Activated CD4-positive, alpha-beta T cell treated with anti-CD3 and anti-CD28 coated beads for 36 hours (primary cell): ENCODE measurements at regions of chr3 and their contacts with region 1.

Region 1: GRCh38 chr3:119293871-119294695 is at the start of gene ARHGAP31:
- DNase-seq: peak; percentile 93
- ATAC-seq: peak; percentile 78
- H3K4me3 Mint-ChIP-seq: peak within 1 kb of the TSS; percentile 82
- H3K27ac Mint-ChIP-seq: peak within 1 kb of the TSS; percentile 93
- H3K4me1 Mint-ChIP-seq: peaks cover 52% of the 10 kb centered on the region
- H3K27me3 Mint-ChIP-seq: no peaks in the 10 kb centered on the region
- total RNA-seq, gene ARHGAP31: 9.2 to 9.6 TPM

Region 2: DNA sequence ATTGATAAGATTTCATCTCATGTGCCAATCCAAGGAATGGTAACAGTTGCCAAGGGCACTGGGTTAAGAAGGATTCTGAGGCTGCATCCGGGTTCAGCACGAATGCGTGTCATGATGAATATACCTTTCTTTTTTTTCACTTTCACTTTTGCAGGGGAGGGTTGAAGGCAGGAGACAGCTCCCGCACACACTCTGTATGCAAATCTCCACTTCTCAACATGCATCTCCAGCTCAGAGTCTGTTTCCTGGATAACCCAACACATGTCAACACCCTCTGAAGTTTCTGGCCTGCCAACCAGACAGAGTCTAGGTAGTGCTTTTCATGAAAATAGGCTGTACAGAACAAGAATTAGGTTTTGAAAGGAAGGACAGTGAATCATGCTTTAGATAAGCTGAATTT is 75.0 kb before region 1 on chr3:
- CTCF ChIA-PET with region 1: no interaction called
- POLR2A ChIA-PET with region 1: no interaction called
- intact Hi-C with region 1: loop called in 1 of 2 experiments (anchors 1 kb)
- DNase-seq: peak; percentile 64
- ATAC-seq: peak; percentile 93
- H3K4me3 Mint-ChIP-seq: peak overlapping the region; percentile 45
- H3K27ac Mint-ChIP-seq: peak overlapping the region; percentile 84
- H3K4me1 Mint-ChIP-seq: peaks cover 51% of the 10 kb centered on the region
- H3K27me3 Mint-ChIP-seq: no peaks in the 10 kb centered on the region

Region 3: DNA sequence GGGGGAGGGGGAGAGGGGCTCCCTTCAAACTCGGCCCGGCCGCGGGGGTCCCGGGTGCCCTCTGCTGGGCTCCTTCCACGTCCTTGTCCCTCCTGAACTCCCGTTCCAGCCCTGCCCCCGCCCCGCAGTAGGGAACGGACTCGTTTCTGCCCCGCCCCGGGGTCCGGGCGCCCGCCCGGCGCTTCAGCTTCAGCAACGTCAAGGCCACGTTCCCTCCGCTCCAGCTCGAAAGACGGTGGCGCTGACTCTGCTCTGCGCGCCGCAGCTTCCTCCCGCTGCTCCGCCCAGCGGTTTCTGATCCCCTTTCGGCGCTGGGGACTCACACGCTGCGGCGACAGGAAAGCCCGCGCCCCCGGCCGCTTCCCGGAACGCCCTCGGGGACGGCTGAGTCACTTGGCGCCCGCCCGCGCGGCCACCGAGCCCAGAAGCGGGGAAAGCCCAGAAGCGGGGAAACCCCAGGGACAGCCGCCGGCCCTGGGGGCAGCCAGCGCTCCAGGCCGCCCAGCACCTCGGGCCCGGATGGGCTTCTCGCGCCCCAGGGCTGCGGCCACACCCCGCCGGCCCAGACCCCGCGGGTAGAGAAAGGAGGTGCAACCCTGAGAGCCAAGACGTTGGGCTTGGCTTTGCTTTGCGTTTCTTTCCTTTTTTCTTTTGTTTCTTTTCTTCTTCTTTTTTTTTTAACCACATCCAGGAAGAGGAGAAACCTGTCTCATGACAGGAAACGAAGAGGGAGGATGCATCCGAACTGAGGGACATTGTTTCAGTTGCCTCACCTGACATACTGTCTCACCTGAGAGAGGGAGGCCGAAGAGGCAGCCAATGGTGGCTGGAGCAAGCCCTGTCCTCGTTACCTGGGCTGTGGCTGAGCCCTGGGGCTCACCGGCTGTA is 29.0 kb after region 1 on chr3:
- CTCF ChIA-PET with region 1: interaction called, 6 read pairs
- POLR2A ChIA-PET with region 1: interaction called, 18 read pairs
- intact Hi-C with region 1: loop called (anchors 1 kb)
- DNase-seq: peak; percentile 97
- ATAC-seq: peak; percentile 92
- H3K4me3 Mint-ChIP-seq: peak overlapping the region; percentile 83
- H3K27ac Mint-ChIP-seq: peak overlapping the region; percentile 87
- H3K4me1 Mint-ChIP-seq: peaks cover 46% of the 10 kb centered on the region
- H3K27me3 Mint-ChIP-seq: no peaks in the 10 kb centered on the region

Region 4: DNA sequence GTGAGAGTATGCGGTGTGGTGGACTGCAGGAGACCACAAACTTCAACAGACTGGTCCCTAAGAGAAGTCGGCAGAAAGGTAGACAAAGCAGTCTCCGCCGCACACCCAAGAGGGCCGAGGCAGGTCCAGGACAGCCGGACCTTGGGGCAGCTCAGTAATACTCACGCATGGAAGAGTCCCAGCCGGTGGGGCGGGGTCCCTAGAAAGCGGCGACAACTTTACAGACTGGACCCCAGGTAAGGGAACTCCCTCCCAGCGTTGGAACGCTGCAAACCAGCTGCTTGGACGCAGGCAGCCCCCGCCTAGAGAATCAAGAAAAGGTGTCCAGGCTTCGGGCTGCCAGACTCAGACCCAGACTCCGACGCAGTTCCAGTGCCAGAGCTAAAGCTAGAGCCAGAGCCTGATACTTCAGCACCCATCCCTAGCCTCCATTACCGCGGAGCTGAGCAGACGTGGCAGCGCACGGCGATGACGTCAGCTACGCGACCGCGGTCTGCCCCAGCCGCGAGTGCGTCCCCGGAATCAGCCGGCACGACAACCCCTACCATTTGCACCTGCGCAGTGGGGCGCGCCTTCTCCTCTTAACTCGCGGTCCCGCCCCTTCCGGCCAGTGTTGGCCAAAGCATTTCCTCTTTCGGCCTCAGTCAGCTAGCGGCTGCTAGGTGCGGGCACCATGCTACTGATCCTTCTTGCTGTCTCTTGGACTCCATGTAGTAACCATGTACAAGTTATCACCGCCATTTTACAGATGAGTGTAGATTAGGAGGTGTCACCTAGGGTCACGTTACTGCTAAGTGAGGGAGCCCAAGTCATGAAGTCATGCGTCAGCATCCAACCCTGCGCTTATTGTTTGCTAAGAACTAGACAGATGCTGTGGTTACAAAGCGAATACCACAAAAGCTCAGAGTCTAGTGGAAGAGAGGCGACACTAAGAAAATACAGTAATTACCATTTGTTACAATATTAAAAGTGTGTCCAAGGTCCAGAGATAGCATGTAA is 169.4 kb after region 1 on chr3 and contains the start of gene TMEM39A:
- CTCF ChIA-PET with region 1: no interaction called
- POLR2A ChIA-PET with region 1: interaction called, 5 read pairs
- intact Hi-C with region 1: loop called (anchors 1 to 2 kb)
- DNase-seq: peak; percentile 99
- ATAC-seq: peak; percentile 89
- H3K4me3 Mint-ChIP-seq: peak within 1 kb of the TSS; percentile 99
- H3K27ac Mint-ChIP-seq: peak within 1 kb of the TSS; percentile 91
- H3K4me1 Mint-ChIP-seq: peaks cover 41% of the 10 kb centered on the region
- H3K27me3 Mint-ChIP-seq: no peaks in the 10 kb centered on the region
- total RNA-seq, gene TMEM39A: 24.5 to 30.5 TPM

Region 5: DNA sequence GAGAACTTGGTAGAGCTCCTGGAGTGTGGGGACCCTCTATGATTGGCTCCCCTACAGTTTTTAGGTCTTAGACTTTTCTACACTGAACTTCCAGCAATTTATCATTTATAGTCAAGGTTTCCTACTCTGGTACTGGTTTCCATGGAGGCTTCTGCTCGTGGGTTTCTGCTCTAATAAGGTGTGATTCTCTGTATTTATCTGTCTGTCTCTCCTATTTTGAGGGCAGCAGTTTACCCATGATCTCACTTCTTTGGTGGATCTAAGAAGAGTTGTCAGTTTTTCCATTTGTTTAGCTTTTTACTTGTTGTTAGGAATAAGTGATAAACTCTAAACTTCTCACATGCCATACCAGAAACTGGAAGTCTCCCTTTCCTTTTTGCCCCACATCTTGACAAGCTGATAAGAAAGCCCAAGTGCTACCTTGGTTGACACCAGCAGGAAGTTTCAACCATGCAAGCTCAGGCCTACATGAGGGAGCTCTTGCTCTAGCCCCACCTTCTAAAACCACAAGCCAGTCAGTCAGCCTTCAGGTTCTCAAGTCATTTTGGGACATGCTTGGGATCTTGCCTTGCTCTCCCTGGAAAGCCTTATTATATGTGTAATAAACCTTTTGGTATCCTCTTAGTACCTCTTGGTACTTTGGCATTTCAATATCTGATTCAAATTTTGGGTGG is 214.2 kb after region 1 on chr3:
- CTCF ChIA-PET with region 1: no interaction called
- POLR2A ChIA-PET with region 1: no interaction called
- intact Hi-C with region 1: no loop called
- DNase-seq: peak; percentile 34
- ATAC-seq: peak; percentile 84
- H3K4me3 Mint-ChIP-seq: no peak overlapping the region
- H3K27ac Mint-ChIP-seq: peak overlapping the region; percentile 90
- H3K4me1 Mint-ChIP-seq: peaks cover 36% of the 10 kb centered on the region
- H3K27me3 Mint-ChIP-seq: no peaks in the 10 kb centered on the region

Region 6: GRCh38 chr3:119637679-119638525 is 343.8 kb after region 1 on chr3:
- CTCF ChIA-PET with region 1: no interaction called
- POLR2A ChIA-PET with region 1: no interaction called
- intact Hi-C with region 1: loop called in 1 of 2 experiments (anchors 1 kb)
- DNase-seq: peak; percentile 14
- ATAC-seq: peak; percentile 34
- H3K4me3 Mint-ChIP-seq: no peak overlapping the region
- H3K27ac Mint-ChIP-seq: peak overlapping the region; percentile 92
- H3K4me1 Mint-ChIP-seq: peaks cover 38% of the 10 kb centered on the region
- H3K27me3 Mint-ChIP-seq: no peaks in the 10 kb centered on the region